Cardiac septum (tissue), 1 donor: ENCODE measurements at regions of chr2 and their contacts with region 1.

Region 1: GRCh38 chr2:168136392-168136977 is 110.9 kb downstream of the STK39 start:
- DNase-seq: no peak

Region 2: DNA sequence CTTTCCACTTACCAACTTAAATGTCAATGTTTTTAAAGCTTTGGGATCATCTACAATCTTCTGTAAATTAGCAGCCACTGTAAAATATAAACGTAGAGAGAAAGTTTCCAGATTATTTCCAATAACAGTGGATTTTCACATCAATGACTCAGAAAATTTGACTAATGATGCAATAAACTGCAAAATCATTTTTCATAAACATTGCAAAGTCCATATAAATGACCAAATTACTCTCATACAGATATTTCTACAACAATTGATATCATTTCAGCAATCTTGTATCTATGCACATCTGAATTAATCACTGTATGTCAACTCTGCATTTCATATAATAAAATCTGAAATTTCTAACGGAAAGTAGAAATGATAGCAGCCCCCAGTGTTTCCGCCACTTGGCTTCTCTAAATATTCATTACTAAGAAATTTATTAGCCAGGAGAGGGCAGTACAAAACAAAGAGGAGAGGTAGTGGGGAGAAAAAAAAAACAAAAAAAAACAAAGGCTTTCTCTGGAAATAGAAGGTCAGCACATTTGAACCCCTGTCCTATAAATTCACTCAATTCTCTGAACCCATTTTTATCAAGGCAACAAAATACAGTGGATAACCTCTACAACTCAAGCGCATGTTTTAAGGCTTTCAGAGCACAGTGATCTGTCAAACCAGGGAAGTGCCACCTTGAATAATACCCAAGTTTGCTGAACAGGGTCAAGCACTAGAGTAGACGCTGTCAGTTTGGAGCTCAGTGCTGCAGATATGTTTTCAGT is 171.7 kb before region 1 on chr2:
- intact Hi-C with region 1: no loop called
- DNase-seq: no peak

Region 3: DNA sequence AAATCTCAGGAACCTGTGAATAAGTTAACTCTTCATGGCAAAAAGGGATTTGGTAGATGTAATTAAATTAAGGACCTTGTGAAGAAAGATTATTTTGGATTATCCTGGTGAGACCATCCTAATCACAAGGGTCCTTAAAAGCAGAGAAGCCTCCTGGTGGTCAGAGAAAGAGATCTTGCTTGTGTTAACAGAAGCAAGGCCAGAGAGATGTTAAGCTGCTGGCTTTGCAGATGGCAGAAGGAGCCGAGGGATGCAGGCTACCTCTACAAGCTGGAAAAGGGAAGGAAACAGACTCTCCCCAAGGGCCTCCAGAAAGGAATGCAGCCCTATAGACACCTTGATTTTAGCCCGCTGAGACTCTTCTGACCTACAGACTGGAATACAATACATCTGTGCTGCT is 86.1 kb before region 1 on chr2:
- intact Hi-C with region 1: no loop called
- DNase-seq: no peak

Region 4: GRCh38 chr2:168246483-168247340 is 110.2 kb after region 1 on chr2:
- intact Hi-C with region 1: loop called (anchors 5 kb)
- DNase-seq: peak; percentile 87

Region 5: GRCh38 chr2:168323529-168324021 is 187.1 kb after region 1 on chr2:
- intact Hi-C with region 1: loop called (anchors 5 kb)
- DNase-seq: no peak

Region 6: GRCh38 chr2:168434146-168434545 is 297.7 kb after region 1 on chr2:
- intact Hi-C with region 1: loop called (anchors 10 kb)
- DNase-seq: no peak

Region 7: GRCh38 chr2:168766600-168766999 is 630.1 kb after region 1 on chr2:
- intact Hi-C with region 1: no loop called
- DNase-seq: no peak